H1 (cell line): ENCODE measurements at regions of chr1 and their contacts with region 1.

Region 1: GRCh38 chr1:160098852-160099561 is 588 bp upstream of the IGSF8 start:
- DNase-seq: peak; percentile 81 to 99
- H3K4me3 ChIP-seq: peak overlapping the region; percentile 33 to 56 (median 50); a peak in 7 of 8 replicates
- H3K27ac ChIP-seq: peak overlapping the region; percentile 21; the same call in 1 of the 2 replicates
- H3K4me1 ChIP-seq: peaks cover 12 to 50% (median 33%) of the 10 kb centered on the region in 4 experiments
- H3K27me3 ChIP-seq: no peaks in the 10 kb centered on the region
- CTCF ChIP-seq: no peak
- EP300 ChIP-seq: no peak
- POLR2A ChIP-seq: no peak
- RAD21 ChIP-seq: 0 out of 4 replicates have a peak, but pooled peaks of 1 of the 2 experiments have one; percentile 3

Region 2: DNA sequence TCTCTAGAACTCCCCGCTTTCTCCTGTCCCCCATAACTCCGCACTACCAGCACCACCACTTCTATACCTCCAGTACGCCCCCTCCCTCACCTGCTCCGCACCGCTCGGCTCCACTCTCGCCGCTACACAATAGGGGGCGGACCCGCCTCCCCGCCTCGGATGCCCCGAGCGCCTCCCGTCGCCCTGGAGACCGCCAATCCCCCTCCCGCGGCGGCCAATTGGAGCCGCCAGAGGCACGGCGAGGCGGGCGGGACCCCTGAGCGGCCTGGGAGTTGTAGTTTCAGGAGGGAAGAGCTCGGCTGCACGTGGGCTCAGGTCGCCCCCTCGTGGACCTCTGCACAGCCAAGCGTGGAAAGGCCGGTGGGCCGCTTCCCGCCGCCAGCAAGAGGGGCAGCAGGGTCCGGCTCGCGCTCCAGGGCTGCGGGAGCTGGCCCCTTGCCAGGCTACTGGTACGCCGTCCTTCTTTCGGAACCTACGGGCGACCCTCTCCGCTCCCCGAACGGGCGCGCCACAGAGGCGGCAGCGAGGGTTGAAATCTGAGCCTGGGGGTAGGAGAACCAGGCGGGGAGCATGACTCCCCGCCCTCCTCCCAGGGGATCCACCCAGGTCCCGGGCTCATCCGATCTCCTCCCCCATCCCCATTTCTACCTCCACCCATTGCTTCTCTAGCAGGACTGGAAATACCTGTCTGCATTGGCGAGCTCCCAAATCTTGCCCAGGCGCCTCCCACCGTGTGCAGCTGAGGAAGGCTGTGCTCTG is 153.3 kb before region 1 on chr1 and contains the start of gene IGSF9:
- CTCF ChIA-PET with region 1: no interaction called
- POLR2A ChIA-PET with region 1: no interaction called
- DNase-seq: peak; percentile 81 to 96
- H3K4me3 ChIP-seq: peak within 1 kb of the TSS; percentile 49 to 82 (median 62)
- H3K27ac ChIP-seq: peak within 1 kb of the TSS; percentile 80; the same call in 1 of the 2 replicates
- H3K4me1 ChIP-seq: peaks cover 7 to 24% (median 15%) of the 10 kb centered on the region in 4 experiments
- H3K27me3 ChIP-seq: no peaks in the 10 kb centered on the region
- CTCF ChIP-seq: peak; percentile 27 to 41 (median 40)
- EP300 ChIP-seq: no peak
- POLR2A ChIP-seq: peak; percentile 19 to 79
- RAD21 ChIP-seq: peak; percentile 37 to 44; a peak in 3 of 4 replicates
- total RNA-seq, gene IGSF9: 28.1 and 29.2 TPM in 2 replicates

Region 3: GRCh38 chr1:160078512-160079195 is 20.4 kb before region 1 on chr1:
- CTCF ChIA-PET with region 1: interaction called, 1,874 read pairs
- POLR2A ChIA-PET with region 1: interaction called, 23 read pairs
- DNase-seq: peak in 1 of 2 experiments; percentile 90
- H3K4me3 ChIP-seq: no peak overlapping the region
- H3K27ac ChIP-seq: no peak overlapping the region
- H3K4me1 ChIP-seq: no peaks in the 10 kb centered on the region
- H3K27me3 ChIP-seq: peaks cover 0 to 33% (median 20%) of the 10 kb centered on the region in 4 experiments; a peak in 6 of 7 replicates
- CTCF ChIP-seq: peak; percentile 91 to 95 (median 93)
- EP300 ChIP-seq: no peak
- POLR2A ChIP-seq: no peak
- RAD21 ChIP-seq: peak; percentile 75 to 84

Region 4: DNA sequence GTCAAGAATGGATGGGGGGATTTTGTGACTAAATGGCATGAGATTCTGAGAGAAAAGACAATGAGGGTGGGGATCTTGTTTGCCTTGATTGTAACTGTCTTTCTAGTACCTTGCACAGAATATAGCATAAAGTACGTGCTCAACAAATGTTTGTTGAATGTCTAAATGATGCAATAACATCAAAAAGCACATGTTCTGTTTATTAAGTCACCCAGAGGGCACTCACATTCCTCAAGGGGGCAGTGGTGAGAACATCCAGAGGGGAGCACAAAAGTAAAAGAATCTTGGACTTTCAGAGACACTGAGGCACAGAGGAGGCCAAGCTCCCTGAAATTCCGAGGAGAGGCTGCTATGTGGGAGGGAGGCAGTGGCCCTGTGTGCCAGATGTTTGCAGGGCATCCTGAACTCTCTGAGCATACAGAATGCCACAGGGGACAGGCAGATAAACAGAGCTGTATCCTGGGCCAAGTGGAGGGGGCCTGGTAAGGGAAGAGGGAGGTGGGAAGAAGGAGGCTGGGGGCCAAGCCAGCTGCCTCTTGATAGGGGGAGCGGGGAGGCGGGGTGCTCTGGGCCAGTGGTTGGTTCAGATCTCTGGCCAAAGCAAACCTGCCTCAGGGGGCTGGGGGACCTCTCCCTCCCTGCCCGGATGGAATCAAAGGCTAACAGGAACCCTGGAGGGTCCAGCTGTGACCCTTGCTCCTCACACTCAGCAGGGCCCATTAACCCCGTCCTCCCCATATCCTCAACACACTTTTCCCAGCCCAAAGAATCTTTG is 10.1 kb after region 1 on chr1:
- CTCF ChIA-PET with region 1: interaction called, 256 read pairs
- POLR2A ChIA-PET with region 1: interaction called, 11 read pairs
- DNase-seq: peak in 1 of 2 experiments; percentile 69
- H3K4me3 ChIP-seq: no peak overlapping the region
- H3K27ac ChIP-seq: no peak overlapping the region
- H3K4me1 ChIP-seq: peaks cover 8 to 32% (median 20%) of the 10 kb centered on the region in 4 experiments
- H3K27me3 ChIP-seq: no peaks in the 10 kb centered on the region; a peak in 1 of 7 replicates
- CTCF ChIP-seq: peak; percentile 4 to 73 (median 44)
- EP300 ChIP-seq: peak in 1 of 2 experiments; percentile 49; a peak in 1 of 3 replicates
- POLR2A ChIP-seq: no peak
- RAD21 ChIP-seq: peak; percentile 24 to 35; a peak in 3 of 4 replicates

Region 5: DNA sequence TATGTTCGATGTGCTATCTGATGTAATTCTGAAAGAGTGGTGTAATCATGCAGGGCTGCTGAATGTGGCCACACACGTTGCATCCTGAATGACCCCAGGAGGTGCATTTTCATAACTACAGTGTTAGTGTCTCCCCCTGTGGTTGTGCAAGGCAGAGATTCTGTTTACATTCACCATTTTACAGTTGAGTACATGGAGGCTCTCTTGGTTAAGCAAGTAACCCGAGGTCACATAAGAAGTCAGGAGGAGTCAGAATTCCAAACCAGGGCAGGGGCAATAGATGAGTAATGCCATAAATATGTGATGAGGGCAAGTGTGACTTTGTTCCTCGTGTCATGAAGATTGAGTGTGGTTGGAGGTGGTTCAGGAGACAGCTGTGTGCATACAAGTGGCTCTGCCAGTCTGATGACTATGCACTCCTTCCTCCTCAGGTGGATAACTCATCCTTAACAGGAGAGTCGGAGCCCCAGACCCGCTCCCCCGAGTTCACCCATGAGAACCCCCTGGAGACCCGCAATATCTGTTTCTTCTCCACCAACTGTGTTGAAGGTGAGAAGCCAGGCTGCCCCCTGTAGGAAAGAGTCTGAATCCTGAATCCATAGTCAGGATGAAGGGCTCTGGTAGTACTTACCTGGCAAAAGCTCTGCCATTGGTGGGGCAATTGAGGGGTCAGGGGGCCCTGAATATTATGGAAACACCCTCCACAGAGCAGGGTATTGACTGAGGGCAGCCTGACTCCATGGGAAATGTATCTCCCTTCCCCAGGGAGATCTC is 25.9 kb after region 1 on chr1:
- CTCF ChIA-PET with region 1: interaction called, 256 read pairs
- POLR2A ChIA-PET with region 1: interaction called, 5 read pairs
- DNase-seq: no peak
- H3K4me3 ChIP-seq: no peak overlapping the region
- H3K27ac ChIP-seq: no peak overlapping the region
- H3K4me1 ChIP-seq: peaks cover 0 to 6% (median 0%) of the 10 kb centered on the region in 4 experiments; a peak in 2 of 7 replicates
- H3K27me3 ChIP-seq: no peaks in the 10 kb centered on the region
- CTCF ChIP-seq: peak in 2 of 3 experiments; percentile 25 to 39; a peak in 3 of 4 replicates
- EP300 ChIP-seq: no peak
- POLR2A ChIP-seq: no peak
- RAD21 ChIP-seq: peak; percentile 30 to 47; a peak in 3 of 4 replicates

Region 6: DNA sequence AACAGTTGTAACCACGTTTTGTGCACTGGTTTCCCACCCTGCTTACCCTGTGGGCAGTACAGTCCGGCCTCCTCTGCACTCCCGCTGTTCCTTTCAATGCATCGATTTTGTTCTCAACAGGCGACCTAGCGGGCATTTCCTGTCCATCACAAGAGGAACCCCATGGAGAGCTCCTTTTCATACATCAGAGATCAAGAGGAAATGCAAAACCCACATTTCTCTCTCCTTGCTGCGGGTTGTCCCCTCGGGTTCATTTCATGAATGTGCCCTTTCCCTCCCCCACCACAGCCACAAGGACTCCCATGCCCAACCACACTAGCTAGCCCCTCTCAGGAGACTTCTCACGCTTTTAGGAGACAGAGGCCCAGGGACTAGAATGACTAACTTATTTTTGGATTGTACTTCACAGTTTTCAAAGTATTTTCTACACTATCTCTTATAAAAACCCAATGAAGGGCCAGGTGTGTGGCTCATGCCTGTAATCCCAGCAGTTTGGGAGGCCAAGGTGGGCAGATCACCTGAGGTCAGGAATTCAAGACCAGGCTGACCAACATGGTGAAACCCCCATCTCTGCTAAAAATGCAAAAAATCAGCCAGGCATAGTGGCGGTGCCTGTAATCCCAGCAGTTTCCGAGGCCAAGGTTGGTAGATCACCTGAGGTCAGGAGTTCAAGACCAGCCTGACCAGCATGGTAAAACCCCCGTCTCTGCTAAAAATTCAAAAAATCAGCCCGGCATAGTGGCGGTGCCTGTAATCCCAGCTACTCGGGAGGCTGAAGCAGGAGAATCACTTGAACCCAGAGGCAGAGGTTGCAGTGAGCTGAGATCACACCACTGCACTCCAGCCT is 70.8 kb after region 1 on chr1:
- CTCF ChIA-PET with region 1: interaction called, 8 read pairs
- POLR2A ChIA-PET with region 1: interaction called, 10 read pairs
- DNase-seq: peak; percentile 79 to 86
- H3K4me3 ChIP-seq: peak overlapping the region in 3 of 4 experiments; percentile 7 to 50 (median 13); a peak in 5 of 8 replicates
- H3K27ac ChIP-seq: peak overlapping the region; percentile 46; the same call in 1 of the 2 replicates
- H3K4me1 ChIP-seq: peaks cover 12 to 28% (median 22%) of the 10 kb centered on the region in 4 experiments; a peak in 6 of 7 replicates
- H3K27me3 ChIP-seq: peaks cover 0 to 2% (median under 1%) of the 10 kb centered on the region in 4 experiments; a peak in 2 of 7 replicates
- CTCF ChIP-seq: no peak
- EP300 ChIP-seq: peak in 1 of 2 experiments; percentile 96; a peak in 2 of 3 replicates
- POLR2A ChIP-seq: no peak
- RAD21 ChIP-seq: no peak

Region 7: DNA sequence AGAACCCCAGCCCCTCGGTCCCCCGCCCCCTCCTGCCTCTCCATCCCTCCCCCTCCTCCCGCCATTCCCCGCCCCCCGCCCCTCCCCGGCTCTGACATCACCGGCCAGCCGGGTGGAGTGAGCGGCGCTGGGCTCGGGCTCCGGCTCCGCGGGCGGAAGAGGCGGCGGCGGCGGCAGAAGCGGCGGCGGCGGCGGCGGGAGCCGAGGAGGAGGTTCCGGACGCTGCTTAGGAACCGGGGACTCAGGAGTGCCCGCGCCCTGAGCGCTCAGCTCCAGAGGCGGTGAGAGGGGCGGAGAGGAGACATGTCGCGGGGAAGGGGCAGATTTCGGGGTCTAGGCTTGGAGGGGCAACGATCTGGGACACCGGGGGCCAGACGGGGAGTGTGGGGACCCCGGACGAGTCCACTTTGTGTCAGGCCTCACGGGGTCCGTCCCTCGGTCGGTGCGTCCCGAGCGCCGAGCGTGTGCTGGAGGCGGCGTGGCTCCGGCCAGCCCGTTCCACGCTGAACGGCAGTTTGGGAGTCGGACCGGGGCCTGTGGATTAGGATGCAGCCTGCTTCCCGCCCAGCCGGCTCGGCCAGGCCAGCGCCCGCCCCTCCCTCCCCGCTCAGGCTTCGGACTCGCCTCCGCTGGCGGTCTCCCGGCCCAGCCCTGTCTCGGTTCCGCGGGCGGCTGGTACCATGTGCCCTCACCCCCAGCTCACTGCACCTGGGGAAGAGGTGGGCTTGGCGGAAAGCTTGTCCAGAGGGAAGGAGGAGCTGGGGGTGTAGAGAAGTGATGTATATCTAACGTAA is 106.4 kb after region 1 on chr1 and contains the start of gene PEA15:
- CTCF ChIA-PET with region 1: interaction called, 10 read pairs
- POLR2A ChIA-PET with region 1: interaction called, 5 read pairs
- DNase-seq: peak in 1 of 2 experiments; percentile 82
- H3K4me3 ChIP-seq: peak within 1 kb of the TSS; percentile 70 to 99 (median 86)
- H3K27ac ChIP-seq: peak within 1 kb of the TSS; percentile 75; the same call in 1 of the 2 replicates
- H3K4me1 ChIP-seq: peaks cover 13 to 35% (median 20%) of the 10 kb centered on the region in 4 experiments
- H3K27me3 ChIP-seq: no peaks in the 10 kb centered on the region
- CTCF ChIP-seq: no peak
- EP300 ChIP-seq: no peak
- POLR2A ChIP-seq: peak in 1 of 2 experiments; percentile 48; a peak in 2 of 3 replicates
- RAD21 ChIP-seq: no peak
- total RNA-seq, gene PEA15: 75.1 and 78.8 TPM in 2 replicates

Region 8: DNA sequence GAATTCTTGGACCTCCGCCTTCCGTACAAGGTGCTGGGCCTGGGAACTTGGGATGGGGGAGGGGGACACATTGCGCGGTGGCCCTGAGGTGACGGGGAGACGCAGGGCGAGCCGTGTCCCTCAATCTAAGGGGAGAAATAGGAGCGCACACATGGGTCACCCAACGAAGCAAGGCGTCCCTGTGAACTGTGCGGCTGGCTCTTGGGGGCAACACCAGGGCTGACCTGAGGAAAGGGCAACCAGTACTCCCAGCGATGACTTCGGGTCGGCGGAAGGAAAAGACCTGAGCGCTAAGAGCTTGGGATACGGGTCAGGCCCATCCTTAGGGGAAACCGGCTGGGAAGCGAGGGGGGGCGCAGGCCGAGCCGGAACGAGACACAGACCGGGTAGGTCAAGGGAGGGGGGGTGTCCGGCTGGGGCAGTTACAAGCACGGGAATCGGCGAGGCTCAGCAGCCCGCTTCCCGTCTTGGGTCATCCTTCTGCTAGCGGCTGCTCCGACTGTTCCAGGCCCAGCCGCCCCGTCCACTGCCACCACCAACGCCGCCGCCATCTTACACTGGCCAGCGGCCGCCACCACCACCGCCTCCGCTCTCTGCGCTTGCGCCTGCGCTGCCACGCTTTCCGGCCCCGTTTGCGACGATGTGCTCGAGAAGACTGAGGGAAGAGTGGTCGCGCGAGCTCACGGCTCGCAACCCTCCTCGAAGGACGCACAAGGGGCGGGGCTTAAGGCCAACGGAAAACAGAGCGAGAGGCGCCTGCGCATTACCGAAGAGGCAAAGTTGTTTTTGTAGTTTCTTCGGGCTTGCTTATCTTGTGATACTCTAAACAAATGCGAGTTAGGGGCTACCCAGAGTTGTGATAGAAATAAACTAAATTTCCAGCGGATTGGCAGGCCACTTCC is 163.1 kb after region 1 on chr1 and contains the start of gene DCAF8:
- CTCF ChIA-PET with region 1: interaction called, 3 read pairs
- POLR2A ChIA-PET with region 1: interaction called, 14 read pairs
- DNase-seq: peak; percentile 92 to 98
- H3K4me3 ChIP-seq: peak within 1 kb of the TSS; percentile 91 to 99 (median 96)
- H3K27ac ChIP-seq: peak within 1 kb of the TSS; percentile 97
- H3K4me1 ChIP-seq: peaks cover 2 to 13% (median 5%) of the 10 kb centered on the region in 4 experiments; a peak in 6 of 7 replicates
- H3K27me3 ChIP-seq: no peaks in the 10 kb centered on the region
- CTCF ChIP-seq: no peak
- EP300 ChIP-seq: no peak
- POLR2A ChIP-seq: peak; percentile 98 to 99
- RAD21 ChIP-seq: no peak
- total RNA-seq, gene DCAF8: 110 and 113 TPM in 2 replicates